Spleen (tissue), 13 donors: ENCODE measurements at regions of chr5 and their contacts with region 1.

Region 1: GRCh38 chr5:163459922-163460766 is at the starts of genes HMMR and NUDCD2:
- DNase-seq: peak; percentile 99
- H3K4me3 ChIP-seq: peak within 1 kb of the TSS; percentile 49 to 79 (median 62)
- H3K27ac ChIP-seq: peak within 1 kb of the TSS; percentile 93 to 99 (median 97)
- H3K4me1 ChIP-seq: peaks cover 25 to 61% (median 37%) of the 10 kb centered on the region in 6 donors
- H3K27me3 ChIP-seq: no peaks in the 10 kb centered on the region
- CTCF ChIP-seq: peak in 4 of 11 experiments; percentile 18 to 41 (median 26)
- POLR2A ChIP-seq: peak; percentile 65 to 86 (median 74)
- total RNA-seq, gene HMMR: 1.7 to 10.4 (median 3.7) TPM
- total RNA-seq, gene NUDCD2: 7.6 to 25.9 (median 16.6) TPM

Region 2: DNA sequence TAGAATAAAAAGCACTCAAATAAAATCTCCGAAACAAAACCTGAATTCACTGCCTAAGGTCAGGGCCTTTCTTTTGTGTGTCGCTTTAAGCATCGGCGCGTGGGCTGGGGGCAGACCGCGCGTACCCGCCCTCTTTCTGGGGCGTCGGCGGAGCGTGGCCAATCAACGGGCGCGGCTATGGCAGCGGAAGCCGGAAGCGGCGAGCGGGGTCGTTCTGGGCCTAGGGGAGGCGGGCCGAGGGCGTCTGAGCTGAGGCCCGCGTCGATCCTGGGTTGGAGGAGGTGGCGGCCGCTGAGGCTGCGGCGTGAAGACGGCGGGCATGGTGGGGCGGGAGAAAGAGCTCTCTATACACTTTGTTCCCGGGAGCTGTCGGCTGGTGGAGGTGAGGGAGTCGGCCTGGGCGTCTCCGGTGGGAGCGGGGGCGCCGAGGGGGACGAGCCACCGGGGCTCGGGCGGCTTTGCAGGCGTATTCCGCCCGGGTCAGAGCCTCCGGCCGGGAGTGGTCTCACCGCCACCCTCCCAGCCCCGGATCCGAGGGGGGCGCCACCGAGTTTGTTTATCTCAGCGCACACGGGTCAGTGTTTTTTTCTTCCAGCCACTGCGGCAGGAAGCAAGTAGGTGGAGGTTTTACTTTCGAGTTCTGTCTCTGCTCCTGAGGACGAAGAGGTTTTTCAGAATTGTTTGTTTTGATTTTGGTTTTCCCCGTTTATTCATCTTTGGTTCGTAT is 45.4 kb after region 1 on chr5 and contains the start of gene MAT2B:
- intact Hi-C with region 1: loop called (anchors 5 kb)
- DNase-seq: peak; percentile 99
- H3K4me3 ChIP-seq: peak within 1 kb of the TSS; percentile 42 to 87 (median 64)
- H3K27ac ChIP-seq: peak within 1 kb of the TSS; percentile 97 to 100 (median 98)
- H3K4me1 ChIP-seq: peaks cover 27 to 73% (median 59%) of the 10 kb centered on the region in 6 donors
- H3K27me3 ChIP-seq: no peaks in the 10 kb centered on the region
- CTCF ChIP-seq: peak in 10 of 11 experiments; percentile 51 to 76 (median 60)
- POLR2A ChIP-seq: peak; percentile 77 to 94 (median 82)
- total RNA-seq, gene MAT2B: 70.8 to 110 (median 97.6) TPM

Region 3: DNA sequence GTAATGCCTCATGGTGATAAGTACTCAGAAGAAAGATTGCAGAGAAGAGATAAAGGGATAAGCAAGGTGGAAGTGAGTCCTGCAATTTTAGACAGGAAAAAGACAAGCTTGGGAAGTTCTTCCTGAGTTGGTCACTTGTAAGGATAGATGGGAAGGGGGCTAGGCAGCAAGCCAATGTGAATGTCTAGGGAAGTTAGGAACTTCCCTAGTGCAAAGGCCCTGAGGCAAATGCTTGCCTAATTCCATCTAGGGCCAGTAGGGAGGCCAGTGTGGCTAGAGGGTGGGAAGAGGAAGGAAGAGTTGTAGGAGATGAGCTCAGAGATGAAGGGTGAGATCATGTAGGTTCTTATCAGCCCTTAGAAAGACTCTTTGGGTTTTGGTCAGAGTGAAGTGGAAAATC is 251.9 kb after region 1 on chr5:
- intact Hi-C with region 1: no loop called
- DNase-seq: no peak
- H3K4me3 ChIP-seq: no peak overlapping the region
- H3K27ac ChIP-seq: no peak overlapping the region
- H3K4me1 ChIP-seq: no peaks in the 10 kb centered on the region
- H3K27me3 ChIP-seq: no peaks in the 10 kb centered on the region
- CTCF ChIP-seq: no peak
- POLR2A ChIP-seq: no peak